OCI-LY7 (cell line): ENCODE measurements at regions of chr3 and their contacts with region 1.

Region 1: GRCh38 chr3:15205934-15206661 is at the start of gene CAPN7:
- DNase-seq: peak; percentile 95
- H3K4me3 ChIP-seq: peak within 1 kb of the TSS; percentile 74
- H3K27ac ChIP-seq: peak within 1 kb of the TSS; percentile 74
- H3K4me1 ChIP-seq: peaks cover 30% of the 10 kb centered on the region
- CTCF ChIP-seq: no peak; the same call in 1 of the 2 replicates
- total RNA-seq, gene CAPN7: 20.5 and 33.4 TPM in 2 replicates

Region 2: GRCh38 chr3:15098503-15099363 is 107.4 kb before region 1 on chr3 and contains the start of gene RBSN:
- CTCF ChIA-PET with region 1: interaction called, 3 read pairs
- POLR2A ChIA-PET with region 1: interaction called, 4 read pairs
- intact Hi-C with region 1: loop called (anchors 2 kb)
- DNase-seq: peak; percentile 97
- H3K4me3 ChIP-seq: peak within 1 kb of the TSS; percentile 88
- H3K27ac ChIP-seq: peak within 1 kb of the TSS; percentile 39
- H3K4me1 ChIP-seq: peaks cover 16% of the 10 kb centered on the region
- CTCF ChIP-seq: no peak
- total RNA-seq, gene RBSN: 13.3 and 20.6 TPM in 2 replicates

Region 3: GRCh38 chr3:15268033-15268631 is 62.0 kb after region 1 on chr3:
- CTCF ChIA-PET with region 1: interaction called, 3 read pairs
- POLR2A ChIA-PET with region 1: interaction called, 6 read pairs
- intact Hi-C with region 1: loop called (anchors 2 kb)
- DNase-seq: peak; percentile 90
- H3K4me3 ChIP-seq: no peak overlapping the region
- H3K27ac ChIP-seq: no peak overlapping the region
- H3K4me1 ChIP-seq: peaks cover 18% of the 10 kb centered on the region
- CTCF ChIP-seq: peak; percentile 99

Region 4: DNA sequence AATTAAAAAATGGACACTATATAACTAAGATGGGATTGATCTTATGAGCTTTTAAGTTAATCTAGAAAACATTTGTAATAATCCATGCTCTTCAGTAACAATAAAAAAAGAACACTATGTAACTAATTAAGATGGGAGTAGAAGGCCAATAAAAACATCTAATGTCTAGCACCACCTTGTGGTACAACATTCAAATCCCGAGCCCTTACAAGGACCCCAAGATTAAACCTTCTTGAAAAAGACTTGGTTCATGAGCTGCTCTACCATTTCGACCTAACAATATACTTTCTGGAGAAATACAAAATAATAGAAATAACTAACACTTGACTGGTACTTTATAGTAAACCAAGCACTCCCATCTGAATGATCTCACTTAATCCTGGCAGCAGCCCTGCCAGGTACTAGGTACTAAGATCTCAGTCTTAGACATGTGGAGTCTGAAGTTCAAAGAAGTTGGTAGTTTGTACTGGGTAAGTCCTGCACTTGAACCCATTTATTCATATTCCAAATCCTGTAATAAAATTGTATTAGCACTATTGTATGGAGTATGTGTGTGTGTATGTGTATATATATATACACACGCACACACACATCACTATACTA is 199.5 kb after region 1 on chr3:
- CTCF ChIA-PET with region 1: interaction called, 4 read pairs
- POLR2A ChIA-PET with region 1: interaction called, 5 read pairs
- intact Hi-C with region 1: loop called (anchors 1 kb)
- DNase-seq: peak; percentile 82
- H3K4me3 ChIP-seq: no peak overlapping the region
- H3K27ac ChIP-seq: no peak overlapping the region
- H3K4me1 ChIP-seq: no peaks in the 10 kb centered on the region
- CTCF ChIP-seq: peak; percentile 95

Region 5: GRCh38 chr3:15859507-15860013 is 653.5 kb after region 1 on chr3:
- CTCF ChIA-PET with region 1: no interaction called
- POLR2A ChIA-PET with region 1: no interaction called
- intact Hi-C with region 1: loop called (anchors 5 kb)
- DNase-seq: peak; percentile 91
- H3K4me3 ChIP-seq: peak overlapping the region; percentile 96
- H3K27ac ChIP-seq: peak overlapping the region; percentile 80
- H3K4me1 ChIP-seq: peaks cover 44% of the 10 kb centered on the region
- CTCF ChIP-seq: no peak

Region 6: DNA sequence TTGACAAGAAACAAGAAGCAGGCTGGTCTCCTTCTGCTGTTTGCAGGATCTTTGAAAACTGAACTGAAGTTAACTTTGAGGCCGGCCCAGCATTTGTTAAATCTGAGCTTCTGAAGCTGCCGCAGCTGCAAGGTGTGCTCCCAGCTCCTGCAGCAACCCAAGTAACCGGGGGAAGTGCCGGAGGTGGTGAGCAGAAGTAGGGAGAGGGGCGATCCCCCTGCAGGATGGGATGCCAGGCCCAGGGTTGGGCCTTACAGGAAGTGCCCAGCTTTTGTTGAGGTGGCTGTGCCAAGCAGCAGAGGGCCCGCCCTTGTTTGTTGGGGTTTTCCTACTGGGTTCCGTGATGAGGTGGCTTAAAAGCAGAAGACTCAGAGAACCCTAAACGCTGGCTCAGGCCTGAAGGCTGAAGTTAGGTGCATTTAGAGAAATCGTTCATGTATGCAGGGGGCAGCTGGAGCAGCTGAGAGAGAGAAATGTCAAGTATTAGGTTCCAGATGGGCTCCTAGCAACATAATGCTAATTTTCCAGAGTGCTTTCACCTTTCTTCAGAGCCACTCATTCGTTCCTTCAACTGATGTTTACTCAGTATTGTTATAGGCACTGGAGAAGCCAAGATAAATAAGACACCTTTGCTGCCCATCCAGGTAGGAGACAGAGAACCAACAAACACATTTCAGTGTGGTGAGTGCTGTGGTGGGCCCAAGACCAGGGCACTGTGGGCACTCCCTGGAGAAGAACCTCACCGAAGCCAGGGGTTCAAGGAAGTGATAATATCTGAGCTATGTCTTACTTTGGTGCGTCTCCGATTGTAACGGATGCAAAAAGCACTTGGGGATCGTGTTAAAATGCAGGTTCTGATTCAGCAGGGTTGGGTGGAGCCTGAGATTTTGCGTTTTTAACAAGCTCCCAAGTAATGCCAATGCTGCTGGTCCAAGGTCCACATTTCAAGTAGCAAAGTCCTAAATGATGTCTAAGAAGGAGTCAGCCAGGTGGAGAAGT is 1636.5 kb after region 1 on chr3:
- CTCF ChIA-PET with region 1: no interaction called
- POLR2A ChIA-PET with region 1: no interaction called
- intact Hi-C with region 1: no loop called
- DNase-seq: peak; percentile 73
- H3K4me3 ChIP-seq: peak overlapping the region; percentile 65
- H3K27ac ChIP-seq: peak overlapping the region; percentile 80
- H3K4me1 ChIP-seq: peaks cover 56% of the 10 kb centered on the region
- CTCF ChIP-seq: no peak